ENCODE measurements at regions of chr13 and their contacts with region 1.

Region 1: GRCh38 chr13:42594970-42595571 is 21.1 kb downstream of the TNFSF11 start:
- DNase-seq: peak; percentile 38 to 54
- ATAC-seq: peak; percentile 68 to 70; a peak in 3 of 6 replicates
- H3K4me3 ChIP-seq: no peak overlapping the region
- H3K27ac ChIP-seq: no peak overlapping the region
- H3K4me1 ChIP-seq: no peaks in the 10 kb centered on the region; the same call in 2 of the 3 replicates
- CTCF ChIP-seq: peak; percentile 76
- EP300 ChIP-seq: no peak
- POLR2A ChIP-seq: no peak
- RAD21 ChIP-seq: peak; percentile 67 to 72

Region 2: DNA sequence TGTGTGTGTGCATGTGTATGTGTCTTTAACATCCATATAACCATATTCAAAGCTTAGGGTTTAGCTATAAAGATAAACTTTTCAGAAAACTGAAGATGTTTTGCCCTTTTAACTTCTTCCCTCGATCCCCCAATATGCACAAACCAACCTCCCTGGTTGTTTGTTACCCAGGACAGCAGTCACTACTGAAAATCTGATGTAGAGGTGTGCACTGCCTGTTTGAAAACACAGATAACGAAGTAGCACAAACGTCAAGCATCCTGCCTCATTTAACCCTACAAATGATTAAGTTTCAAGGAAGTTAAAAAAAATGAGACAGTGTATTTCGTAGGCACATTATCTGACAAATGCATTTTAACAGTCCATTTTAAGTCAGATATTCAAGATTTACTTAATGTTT is 17.5 kb before region 1 on chr13:
- CTCF ChIA-PET with region 1: no interaction called
- POLR2A ChIA-PET with region 1: no interaction called
- DNase-seq: no peak
- ATAC-seq: no peak
- H3K4me3 ChIP-seq: no peak overlapping the region
- H3K27ac ChIP-seq: no peak overlapping the region
- H3K4me1 ChIP-seq: no peaks in the 10 kb centered on the region
- CTCF ChIP-seq: no peak
- EP300 ChIP-seq: no peak
- POLR2A ChIP-seq: no peak
- RAD21 ChIP-seq: no peak

Region 3: DNA sequence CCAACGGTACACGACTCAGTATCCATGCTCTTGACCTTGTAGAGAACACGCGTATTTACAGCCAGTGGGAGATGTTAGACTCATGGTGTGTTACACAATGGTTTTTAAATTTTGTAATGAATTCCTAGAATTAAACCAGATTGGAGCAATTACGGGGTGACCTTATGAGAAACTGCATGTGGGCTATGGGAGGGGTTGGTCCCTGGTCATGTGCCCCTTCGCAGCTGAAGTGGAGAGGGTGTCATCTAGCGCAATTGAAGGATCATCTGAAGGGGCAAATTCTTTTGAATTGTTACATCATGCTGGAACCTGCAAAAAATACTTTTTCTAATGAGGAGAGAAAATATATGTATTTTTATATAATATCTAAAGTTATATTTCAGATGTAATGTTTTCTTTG is 12.0 kb after region 1 on chr13:
- CTCF ChIA-PET with region 1: interaction called, 12 read pairs
- POLR2A ChIA-PET with region 1: no interaction called
- DNase-seq: no peak
- ATAC-seq: no peak
- H3K4me3 ChIP-seq: no peak overlapping the region
- H3K27ac ChIP-seq: no peak overlapping the region
- H3K4me1 ChIP-seq: no peaks in the 10 kb centered on the region
- CTCF ChIP-seq: no peak
- EP300 ChIP-seq: no peak
- POLR2A ChIP-seq: no peak
- RAD21 ChIP-seq: no peak

Measured in A549 (cell line).